Colonic mucosa (tissue), 4 donors: ENCODE measurements at regions of chr7 and their contacts with region 1.

Region 1: DNA sequence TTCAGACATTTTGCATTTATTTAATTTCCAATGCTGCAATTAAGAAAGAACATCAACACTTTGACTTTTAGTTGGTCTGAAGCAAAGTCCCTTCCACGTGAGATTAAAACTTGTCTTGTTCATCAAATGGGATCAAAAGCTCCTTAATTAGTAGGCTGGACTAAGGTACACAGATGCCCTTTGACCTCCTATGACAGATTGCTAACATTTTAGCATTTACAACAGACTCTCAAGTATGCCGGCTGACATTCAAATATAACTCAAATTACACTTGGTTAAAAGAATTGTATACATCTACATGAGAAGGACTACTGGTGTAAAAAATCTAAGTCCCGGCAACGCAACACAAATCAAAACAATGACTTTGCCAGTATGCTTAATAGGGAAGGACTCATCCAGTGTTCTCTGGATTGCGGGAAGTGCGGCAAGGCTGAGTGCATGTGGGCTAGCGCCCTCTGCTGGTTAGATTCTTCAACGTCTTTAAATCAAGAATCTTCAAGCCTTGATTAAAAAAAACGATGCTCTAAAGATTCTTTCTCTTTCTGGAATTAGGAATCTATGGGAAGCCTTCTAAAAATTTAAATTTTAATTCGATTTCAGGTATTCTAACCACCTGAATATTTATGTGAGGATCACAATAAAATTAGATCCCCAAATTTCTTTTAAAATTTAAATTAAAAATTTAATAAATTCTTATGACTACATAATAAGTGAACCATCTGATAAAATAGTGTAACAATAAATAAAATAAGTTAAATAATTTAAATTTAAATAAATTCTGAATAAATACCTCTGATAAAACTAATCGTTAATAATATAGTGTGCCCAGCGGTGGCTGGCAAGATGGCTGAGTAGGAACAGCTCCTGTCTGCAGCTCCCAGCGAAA is 444.7 kb downstream of the DGKB start:
- DNase-seq: peak; percentile 69
- H3K4me3 ChIP-seq: no peak overlapping the region
- H3K27ac ChIP-seq: no peak overlapping the region
- H3K4me1 ChIP-seq: no peaks in the 10 kb centered on the region
- H3K27me3 ChIP-seq: no peaks in the 10 kb centered on the region
- CTCF ChIP-seq: peak; percentile 77

Region 2: GRCh38 chr7:13524076-13524475 is 933.7 kb before region 1 on chr7:
- intact Hi-C with region 1: loop called (anchors 10 kb)
- DNase-seq: no peak
- H3K4me3 ChIP-seq: no peak overlapping the region
- H3K27ac ChIP-seq: no peak overlapping the region
- H3K4me1 ChIP-seq: no peaks in the 10 kb centered on the region
- H3K27me3 ChIP-seq: no peaks in the 10 kb centered on the region
- CTCF ChIP-seq: no peak

Region 3: DNA sequence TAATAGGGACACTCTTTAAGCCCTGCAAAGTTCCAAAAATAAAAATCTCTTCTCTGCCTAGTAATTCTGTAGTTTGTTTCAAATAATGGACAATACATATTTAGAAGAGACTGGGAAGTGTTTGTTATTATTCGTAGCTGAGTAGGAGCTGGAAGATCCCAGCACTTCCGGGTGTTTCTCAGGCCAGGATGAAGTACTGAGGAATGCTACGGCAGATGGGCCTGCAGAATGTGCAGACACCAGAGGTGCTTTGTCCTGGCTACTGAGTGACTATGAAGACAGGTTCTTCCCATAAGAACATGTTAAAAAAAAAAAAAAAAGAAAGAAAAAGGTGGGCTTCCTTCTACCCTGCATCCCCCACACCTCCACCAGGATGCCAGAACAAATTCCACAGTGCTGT is 504.4 kb before region 1 on chr7:
- intact Hi-C with region 1: no loop called
- DNase-seq: no peak
- H3K4me3 ChIP-seq: no peak overlapping the region
- H3K27ac ChIP-seq: no peak overlapping the region
- H3K4me1 ChIP-seq: peaks cover 5% of the 10 kb centered on the region
- H3K27me3 ChIP-seq: no peaks in the 10 kb centered on the region
- CTCF ChIP-seq: no peak

Region 4: GRCh38 chr7:14368285-14368684 is 89.5 kb before region 1 on chr7:
- intact Hi-C with region 1: no loop called
- DNase-seq: no peak
- H3K4me3 ChIP-seq: no peak overlapping the region
- H3K27ac ChIP-seq: no peak overlapping the region
- H3K4me1 ChIP-seq: no peaks in the 10 kb centered on the region
- H3K27me3 ChIP-seq: no peaks in the 10 kb centered on the region
- CTCF ChIP-seq: no peak

Region 5: DNA sequence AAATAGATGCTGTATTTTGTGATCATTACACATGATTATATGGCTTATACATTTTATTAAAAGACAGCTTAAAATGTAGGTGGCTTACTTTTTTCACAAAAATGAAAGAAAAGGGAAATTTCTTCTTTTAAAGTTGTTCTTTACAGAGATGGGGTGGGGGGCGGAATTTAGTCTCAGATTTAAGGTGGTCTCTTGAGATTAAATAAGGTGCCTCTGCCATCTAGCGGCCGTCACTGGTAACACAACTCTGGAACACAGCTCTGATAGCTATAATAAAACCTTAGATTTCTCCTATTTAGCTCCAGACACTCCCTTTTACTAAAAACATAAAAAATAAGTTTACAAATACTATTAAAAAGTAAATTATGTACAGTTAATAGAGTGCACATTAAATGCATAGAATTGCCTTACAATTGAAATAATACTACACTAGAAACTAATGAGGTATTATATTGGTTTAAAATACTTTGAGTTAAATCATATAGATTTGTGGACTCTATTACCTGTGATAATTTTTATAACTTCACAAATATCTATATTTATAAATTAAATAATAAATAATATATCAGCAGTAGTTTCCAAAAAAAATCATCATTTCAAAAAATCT is 233.9 kb after region 1 on chr7:
- intact Hi-C with region 1: loop called (anchors 10 kb)
- DNase-seq: peak; percentile 46
- H3K4me3 ChIP-seq: no peak overlapping the region
- H3K27ac ChIP-seq: no peak overlapping the region
- H3K4me1 ChIP-seq: no peaks in the 10 kb centered on the region
- H3K27me3 ChIP-seq: no peaks in the 10 kb centered on the region
- CTCF ChIP-seq: peak; percentile 76